CD8-positive, alpha-beta T cell (primary cell): ENCODE measurements at regions of chr9 and their contacts with region 1.

Region 1: GRCh38 chr9:35646533-35647265 is 4.0 kb downstream of the SIT1 start:
- DNase-seq: peak; percentile 85 to 95 (median 90)
- ATAC-seq: peak; percentile 86
- H3K4me3 ChIP-seq: peak overlapping the region; percentile 71 to 82
- H3K4me3 Mint-ChIP-seq: peak overlapping the region; percentile 93
- H3K27ac ChIP-seq: peak overlapping the region; percentile 67 to 89
- H3K27ac Mint-ChIP-seq: peak overlapping the region; percentile 95
- H3K4me1 ChIP-seq: peaks cover 55% of the 10 kb centered on the region
- H3K4me1 Mint-ChIP-seq: peaks cover 61% of the 10 kb centered on the region
- H3K27me3 ChIP-seq: no peaks in the 10 kb centered on the region
- H3K27me3 Mint-ChIP-seq: no peaks in the 10 kb centered on the region
- CTCF ChIP-seq: peak; percentile 77

Region 2: GRCh38 chr9:35096035-35096849 is 550.5 kb before region 1 on chr9 and contains the start of gene PIGO:
- CTCF ChIA-PET with region 1: no interaction called
- POLR2A ChIA-PET with region 1: no interaction called
- intact Hi-C with region 1: loop called in 1 of 2 experiments (anchors 5 kb)
- DNase-seq: peak; percentile 78 to 94 (median 89)
- ATAC-seq: peak; percentile 90
- H3K4me3 ChIP-seq: peak within 1 kb of the TSS; percentile 95 to 99
- H3K4me3 Mint-ChIP-seq: peak within 1 kb of the TSS; percentile 88
- H3K27ac ChIP-seq: peak within 1 kb of the TSS; percentile 95 to 100
- H3K27ac Mint-ChIP-seq: peak within 1 kb of the TSS; percentile 95
- H3K4me1 ChIP-seq: peaks cover 24% of the 10 kb centered on the region
- H3K4me1 Mint-ChIP-seq: peaks cover 32% of the 10 kb centered on the region
- H3K27me3 ChIP-seq: no peaks in the 10 kb centered on the region
- H3K27me3 Mint-ChIP-seq: no peaks in the 10 kb centered on the region
- CTCF ChIP-seq: peak; percentile 75
- total RNA-seq, gene PIGO: 15.1 to 16.4 TPM

Region 3: GRCh38 chr9:35611230-35611797 is 35.4 kb before region 1 on chr9:
- CTCF ChIA-PET with region 1: interaction called, 32 read pairs
- POLR2A ChIA-PET with region 1: interaction called, 79 read pairs
- intact Hi-C with region 1: no loop called
- DNase-seq: peak; percentile 18 to 80 (median 64)
- ATAC-seq: peak; percentile 99
- H3K4me3 ChIP-seq: no peak overlapping the region
- H3K4me3 Mint-ChIP-seq: no peak overlapping the region
- H3K27ac ChIP-seq: no peak overlapping the region
- H3K27ac Mint-ChIP-seq: peak overlapping the region; percentile 25
- H3K4me1 ChIP-seq: peaks cover 18% of the 10 kb centered on the region
- H3K4me1 Mint-ChIP-seq: peaks cover 16% of the 10 kb centered on the region
- H3K27me3 ChIP-seq: no peaks in the 10 kb centered on the region
- H3K27me3 Mint-ChIP-seq: no peaks in the 10 kb centered on the region
- CTCF ChIP-seq: peak; percentile 64

Region 4: DNA sequence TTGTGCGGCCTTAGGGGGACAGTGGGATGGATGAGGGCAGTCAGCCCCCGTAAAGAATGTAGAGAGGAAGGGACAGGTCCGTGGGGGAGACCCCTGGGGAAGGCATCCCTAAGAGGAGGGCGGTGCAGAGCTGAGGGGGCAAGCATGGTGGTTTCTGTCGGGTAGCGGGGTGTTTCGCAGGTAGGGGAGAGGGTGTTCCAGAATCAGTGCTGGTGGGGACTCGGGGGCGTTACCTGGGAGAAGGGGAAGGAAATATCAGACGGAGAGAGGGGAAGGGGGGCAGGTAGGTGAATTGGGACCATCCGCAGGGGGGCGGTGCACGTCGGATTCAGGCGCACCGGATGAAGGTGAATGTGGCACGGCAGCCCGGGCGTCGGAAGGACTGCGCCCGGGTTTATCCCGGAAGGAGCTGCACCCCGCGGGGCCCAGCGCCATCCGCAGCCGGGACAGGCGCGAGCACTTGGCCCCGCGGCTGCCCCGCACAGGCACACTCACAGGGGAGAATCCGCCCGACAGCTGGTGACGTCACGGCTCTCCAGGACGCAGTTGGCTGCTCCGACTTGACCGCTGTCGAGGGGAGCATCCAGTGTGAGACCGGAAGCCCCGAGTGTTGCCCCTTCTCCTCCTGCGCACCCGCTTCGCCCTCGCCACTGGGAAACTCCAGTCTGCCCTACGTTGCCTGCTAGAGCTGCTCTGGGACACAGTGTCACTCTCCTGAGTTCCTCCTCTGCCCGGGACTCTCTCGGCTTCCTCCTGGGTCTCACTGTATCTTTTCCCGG is 29.8 kb before region 1 on chr9:
- CTCF ChIA-PET with region 1: interaction called, 29 read pairs
- POLR2A ChIA-PET with region 1: interaction called, 79 read pairs
- intact Hi-C with region 1: loop called (anchors 1 kb)
- DNase-seq: peak; percentile 22 to 92 (median 73)
- ATAC-seq: peak; percentile 74
- H3K4me3 ChIP-seq: peak overlapping the region; percentile 44 to 60
- H3K4me3 Mint-ChIP-seq: peak overlapping the region; percentile 85
- H3K27ac ChIP-seq: peak overlapping the region; percentile 36 to 93
- H3K27ac Mint-ChIP-seq: peak overlapping the region; percentile 92
- H3K4me1 ChIP-seq: peaks cover 34% of the 10 kb centered on the region
- H3K4me1 Mint-ChIP-seq: peaks cover 39% of the 10 kb centered on the region
- H3K27me3 ChIP-seq: no peaks in the 10 kb centered on the region
- H3K27me3 Mint-ChIP-seq: no peaks in the 10 kb centered on the region
- CTCF ChIP-seq: peak; percentile 22

Region 5: GRCh38 chr9:35664531-35665470 is 18.1 kb after region 1 on chr9 and contains the start of gene ARHGEF39:
- CTCF ChIA-PET with region 1: interaction called, 135 read pairs
- POLR2A ChIA-PET with region 1: interaction called, 112 read pairs
- intact Hi-C with region 1: loop called in 1 of 2 experiments (anchors 2 kb)
- DNase-seq: peak in 8 of 9 experiments; percentile 54 to 83 (median 62)
- ATAC-seq: peak; percentile 69
- H3K4me3 ChIP-seq: peak within 1 kb of the TSS; percentile 60 to 77
- H3K4me3 Mint-ChIP-seq: peak within 1 kb of the TSS; percentile 82
- H3K27ac ChIP-seq: peak within 1 kb of the TSS in 1 of 2 experiments; percentile 71
- H3K27ac Mint-ChIP-seq: peak within 1 kb of the TSS; percentile 82
- H3K4me1 ChIP-seq: peaks cover 43% of the 10 kb centered on the region
- H3K4me1 Mint-ChIP-seq: peaks cover 53% of the 10 kb centered on the region
- H3K27me3 ChIP-seq: no peaks in the 10 kb centered on the region
- H3K27me3 Mint-ChIP-seq: no peaks in the 10 kb centered on the region
- CTCF ChIP-seq: no peak
- total RNA-seq, gene ARHGEF39: 0.25 to 0.35 TPM

Region 6: DNA sequence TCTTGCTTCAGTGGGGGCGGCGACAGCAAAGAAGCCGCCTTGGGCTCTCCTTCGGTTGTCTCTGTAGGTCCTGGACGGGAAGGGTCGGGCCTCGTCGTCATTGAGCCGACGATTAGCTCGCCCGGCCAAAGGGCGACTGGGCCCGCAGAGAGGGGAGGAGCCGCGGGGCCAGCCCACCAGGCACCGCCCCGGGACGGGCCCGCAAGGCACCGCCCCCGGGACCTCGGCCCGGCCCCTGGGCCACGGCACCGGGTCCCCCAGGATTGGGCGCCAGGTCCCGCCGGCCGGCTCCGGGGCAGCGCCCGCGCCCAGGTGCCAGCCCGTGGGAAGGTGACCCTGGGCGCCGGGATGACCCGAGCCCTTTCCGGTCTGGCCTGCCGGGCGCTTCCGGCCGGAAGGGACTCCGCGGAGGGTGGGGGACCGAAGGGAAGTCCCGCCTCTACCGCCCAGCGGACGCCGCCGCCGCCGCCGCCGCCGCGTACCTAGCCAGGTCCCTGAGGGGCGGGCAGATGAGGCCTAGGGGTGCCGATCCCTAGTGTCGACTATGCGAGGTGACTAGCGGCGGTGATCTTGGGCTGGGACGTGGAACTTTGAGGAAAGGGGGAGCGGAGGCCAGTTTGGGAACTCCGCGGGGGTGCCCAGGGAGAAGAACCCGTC is 102.3 kb after region 1 on chr9 and contains the starts of genes GBA2 and RGP1:
- CTCF ChIA-PET with region 1: no interaction called
- POLR2A ChIA-PET with region 1: interaction called, 3 read pairs
- intact Hi-C with region 1: loop called in 1 of 2 experiments (anchors 5 kb)
- DNase-seq: peak in 8 of 9 experiments; percentile 50 to 80 (median 66)
- ATAC-seq: peak; percentile 66
- H3K4me3 ChIP-seq: peak within 1 kb of the TSS; percentile 80 to 91
- H3K4me3 Mint-ChIP-seq: peak within 1 kb of the TSS; percentile 98
- H3K27ac ChIP-seq: peak within 1 kb of the TSS; percentile 68 to 86
- H3K27ac Mint-ChIP-seq: peak within 1 kb of the TSS; percentile 94
- H3K4me1 ChIP-seq: peaks cover 41% of the 10 kb centered on the region
- H3K4me1 Mint-ChIP-seq: peaks cover 50% of the 10 kb centered on the region
- H3K27me3 ChIP-seq: no peaks in the 10 kb centered on the region
- H3K27me3 Mint-ChIP-seq: no peaks in the 10 kb centered on the region
- CTCF ChIP-seq: no peak
- total RNA-seq, gene GBA2: 14.1 to 14.3 TPM
- total RNA-seq, gene RGP1: 9.6 to 10.4 TPM

Region 7: GRCh38 chr9:35829084-35829763 is 182.5 kb after region 1 on chr9 and contains the start of gene TMEM8B:
- CTCF ChIA-PET with region 1: no interaction called
- POLR2A ChIA-PET with region 1: no interaction called
- intact Hi-C with region 1: loop called in 1 of 2 experiments (anchors 5 kb)
- DNase-seq: peak; percentile 88 to 96 (median 94)
- ATAC-seq: peak; percentile 93
- H3K4me3 ChIP-seq: peak within 1 kb of the TSS; percentile 67 to 89
- H3K4me3 Mint-ChIP-seq: peak within 1 kb of the TSS; percentile 95
- H3K27ac ChIP-seq: peak within 1 kb of the TSS; percentile 64 to 71
- H3K27ac Mint-ChIP-seq: peak within 1 kb of the TSS; percentile 91
- H3K4me1 ChIP-seq: peaks cover 13% of the 10 kb centered on the region
- H3K4me1 Mint-ChIP-seq: peaks cover 41% of the 10 kb centered on the region
- H3K27me3 ChIP-seq: no peaks in the 10 kb centered on the region
- H3K27me3 Mint-ChIP-seq: no peaks in the 10 kb centered on the region
- CTCF ChIP-seq: no peak
- total RNA-seq, gene TMEM8B: 6.4 to 7.2 TPM

Region 8: GRCh38 chr9:35910613-35911359 is 264.1 kb after region 1 on chr9:
- CTCF ChIA-PET with region 1: no interaction called
- POLR2A ChIA-PET with region 1: no interaction called
- intact Hi-C with region 1: no loop called
- DNase-seq: peak in 7 of 9 experiments; percentile 9 to 63 (median 43)
- ATAC-seq: peak; percentile 63
- H3K4me3 ChIP-seq: no peak overlapping the region
- H3K4me3 Mint-ChIP-seq: peak overlapping the region; percentile 63
- H3K27ac ChIP-seq: peak overlapping the region; percentile 19 to 44
- H3K27ac Mint-ChIP-seq: peak overlapping the region; percentile 81
- H3K4me1 ChIP-seq: peaks cover 50% of the 10 kb centered on the region
- H3K4me1 Mint-ChIP-seq: peaks cover 48% of the 10 kb centered on the region
- H3K27me3 ChIP-seq: no peaks in the 10 kb centered on the region
- H3K27me3 Mint-ChIP-seq: no peaks in the 10 kb centered on the region
- CTCF ChIP-seq: peak; percentile 48